ENCODE measurements at regions of chr1 and their contacts with region 1.

Region 1: DNA sequence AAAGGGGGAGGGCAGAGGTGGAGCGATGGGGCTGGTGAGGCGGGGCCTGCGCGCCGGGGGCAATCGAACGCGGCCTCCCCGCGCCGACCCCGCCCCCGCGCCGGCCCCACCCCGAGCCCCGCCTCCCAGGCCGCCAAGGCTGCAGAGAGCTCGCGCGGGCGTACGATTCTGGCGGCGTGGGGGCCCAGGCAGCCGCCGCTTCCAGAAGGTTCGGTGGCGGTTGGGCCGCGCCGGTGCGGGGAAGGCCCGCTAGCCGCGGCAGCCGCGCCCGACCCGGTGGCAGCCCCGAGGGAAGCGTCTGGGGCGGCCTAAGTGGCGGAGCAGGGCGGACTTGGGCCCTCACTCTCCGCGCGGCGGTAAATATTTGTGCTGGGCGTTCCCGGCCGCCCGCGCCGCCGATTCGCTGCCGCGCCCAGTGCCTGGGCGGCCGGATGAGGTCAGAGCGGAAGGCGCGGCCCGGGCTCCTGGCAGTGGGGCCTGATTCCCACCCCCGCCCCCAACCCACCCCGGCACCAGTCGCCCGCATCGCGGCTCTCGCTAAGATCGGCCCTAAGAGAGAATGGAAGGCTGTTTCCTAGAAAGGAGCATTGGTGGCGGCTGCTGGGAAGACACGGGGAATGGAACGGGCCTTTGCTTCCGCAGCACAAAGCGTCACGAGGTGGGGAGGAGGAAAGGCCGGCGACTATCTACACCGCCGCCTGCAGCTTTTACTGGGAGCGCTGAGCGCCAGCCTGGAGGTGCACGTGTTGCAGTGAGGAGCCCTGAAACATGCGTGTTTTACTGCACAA is at the start of gene ACOT7:
- DNase-seq: peak; percentile 94
- H3K4me3 Mint-ChIP-seq: peak within 1 kb of the TSS; percentile 81
- H3K27ac Mint-ChIP-seq: peak within 1 kb of the TSS; percentile 84
- H3K4me1 Mint-ChIP-seq: peaks cover 21% of the 10 kb centered on the region
- H3K27me3 Mint-ChIP-seq: no peaks in the 10 kb centered on the region
- total RNA-seq, gene ACOT7: 74.2 to 77.6 TPM

Region 2: DNA sequence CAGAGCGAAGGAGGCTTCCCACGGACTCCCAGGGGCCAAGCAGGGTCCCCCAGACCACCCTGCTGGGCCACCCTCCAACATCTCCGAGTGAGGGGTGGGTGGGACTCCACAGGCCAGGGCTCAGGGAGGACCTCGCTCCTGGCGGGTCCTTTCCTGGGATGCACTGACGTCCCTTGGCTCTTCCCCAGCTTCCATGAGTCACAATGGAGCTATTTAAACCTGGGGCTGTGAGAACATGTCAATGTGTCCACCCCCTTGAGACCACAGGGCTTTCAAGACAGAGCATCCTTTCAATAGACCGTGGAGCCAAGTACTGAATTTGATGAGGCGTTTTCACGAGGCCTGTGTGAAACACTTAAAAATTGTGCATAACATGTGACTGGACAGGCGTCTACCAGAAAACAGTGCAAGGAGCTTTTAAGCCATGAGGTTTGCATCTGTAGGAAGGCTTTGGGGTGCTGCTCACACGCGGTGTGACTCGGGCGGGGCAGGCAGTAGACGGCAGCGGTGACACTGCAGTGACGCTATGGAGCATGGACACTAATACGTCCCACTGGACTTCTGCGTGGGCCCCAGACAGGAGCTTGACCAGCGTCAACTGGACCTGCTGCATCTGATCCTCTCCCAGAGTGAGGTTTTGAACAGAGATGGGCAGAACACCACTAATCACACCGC is 377.3 kb before region 1 on chr1:
- CTCF ChIA-PET with region 1: no interaction called
- intact Hi-C with region 1: no loop called
- DNase-seq: no peak
- H3K4me3 Mint-ChIP-seq: no peak overlapping the region
- H3K27ac Mint-ChIP-seq: no peak overlapping the region
- H3K4me1 Mint-ChIP-seq: no peaks in the 10 kb centered on the region
- H3K27me3 Mint-ChIP-seq: no peaks in the 10 kb centered on the region

Region 3: DNA sequence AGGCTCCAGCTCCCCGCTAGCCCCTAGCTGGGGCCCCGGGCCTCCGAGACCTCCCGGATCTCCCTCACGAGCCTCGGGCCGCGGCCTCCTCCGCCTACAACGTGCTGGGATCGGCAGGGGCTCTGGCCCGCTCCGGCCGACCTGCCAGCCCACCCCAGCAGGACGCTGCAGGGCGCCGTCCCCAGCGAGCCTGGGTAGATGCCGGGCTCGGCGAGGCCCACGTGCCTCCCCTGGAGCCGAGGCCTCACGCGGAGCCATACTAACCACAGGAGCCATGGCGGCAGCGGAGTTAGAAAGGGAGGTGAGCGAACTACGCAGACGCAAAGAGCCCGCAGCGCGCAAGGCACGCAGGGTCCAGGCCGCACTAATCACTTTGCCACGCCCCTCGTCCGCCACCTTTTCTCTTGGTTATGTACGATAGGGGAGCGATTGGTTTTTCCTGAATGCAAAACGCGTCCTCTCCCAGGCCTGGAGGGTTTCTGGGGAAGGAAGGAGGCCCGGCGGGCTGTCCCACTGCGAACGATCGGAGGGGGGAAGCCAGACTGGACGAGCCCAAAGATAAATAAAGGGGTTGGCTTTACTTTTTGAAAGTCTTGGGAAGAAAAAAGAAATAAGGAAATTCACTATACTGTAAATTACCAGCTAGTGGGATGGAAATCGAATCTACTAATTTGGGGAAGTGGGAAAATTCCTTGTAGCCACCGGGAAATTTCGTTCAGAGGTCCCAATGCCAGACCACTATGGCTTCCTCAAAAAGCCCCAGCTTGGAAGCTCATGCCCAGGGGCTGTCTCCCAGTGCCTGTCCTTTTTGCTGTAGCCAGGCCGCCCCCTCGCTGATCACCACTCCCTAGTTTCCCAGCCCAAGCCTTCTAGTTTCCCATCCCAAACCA is 194.1 kb before region 1 on chr1 and contains the start of gene RPL22:
- CTCF ChIA-PET with region 1: no interaction called
- intact Hi-C with region 1: loop called (anchors 1 kb)
- DNase-seq: peak; percentile 99
- H3K4me3 Mint-ChIP-seq: peak within 1 kb of the TSS; percentile 91
- H3K27ac Mint-ChIP-seq: peak within 1 kb of the TSS; percentile 95
- H3K4me1 Mint-ChIP-seq: peaks cover 39% of the 10 kb centered on the region
- H3K27me3 Mint-ChIP-seq: no peaks in the 10 kb centered on the region
- total RNA-seq, gene RPL22: 507 to 553 TPM

Region 4: GRCh38 chr1:6343506-6344405 is 49.8 kb before region 1 on chr1:
- CTCF ChIA-PET with region 1: interaction called, 6 read pairs
- intact Hi-C with region 1: loop called (anchors 1 kb)
- DNase-seq: peak; percentile 76
- H3K4me3 Mint-ChIP-seq: no peak overlapping the region
- H3K27ac Mint-ChIP-seq: no peak overlapping the region
- H3K4me1 Mint-ChIP-seq: peaks cover 10% of the 10 kb centered on the region
- H3K27me3 Mint-ChIP-seq: no peaks in the 10 kb centered on the region

Region 5: DNA sequence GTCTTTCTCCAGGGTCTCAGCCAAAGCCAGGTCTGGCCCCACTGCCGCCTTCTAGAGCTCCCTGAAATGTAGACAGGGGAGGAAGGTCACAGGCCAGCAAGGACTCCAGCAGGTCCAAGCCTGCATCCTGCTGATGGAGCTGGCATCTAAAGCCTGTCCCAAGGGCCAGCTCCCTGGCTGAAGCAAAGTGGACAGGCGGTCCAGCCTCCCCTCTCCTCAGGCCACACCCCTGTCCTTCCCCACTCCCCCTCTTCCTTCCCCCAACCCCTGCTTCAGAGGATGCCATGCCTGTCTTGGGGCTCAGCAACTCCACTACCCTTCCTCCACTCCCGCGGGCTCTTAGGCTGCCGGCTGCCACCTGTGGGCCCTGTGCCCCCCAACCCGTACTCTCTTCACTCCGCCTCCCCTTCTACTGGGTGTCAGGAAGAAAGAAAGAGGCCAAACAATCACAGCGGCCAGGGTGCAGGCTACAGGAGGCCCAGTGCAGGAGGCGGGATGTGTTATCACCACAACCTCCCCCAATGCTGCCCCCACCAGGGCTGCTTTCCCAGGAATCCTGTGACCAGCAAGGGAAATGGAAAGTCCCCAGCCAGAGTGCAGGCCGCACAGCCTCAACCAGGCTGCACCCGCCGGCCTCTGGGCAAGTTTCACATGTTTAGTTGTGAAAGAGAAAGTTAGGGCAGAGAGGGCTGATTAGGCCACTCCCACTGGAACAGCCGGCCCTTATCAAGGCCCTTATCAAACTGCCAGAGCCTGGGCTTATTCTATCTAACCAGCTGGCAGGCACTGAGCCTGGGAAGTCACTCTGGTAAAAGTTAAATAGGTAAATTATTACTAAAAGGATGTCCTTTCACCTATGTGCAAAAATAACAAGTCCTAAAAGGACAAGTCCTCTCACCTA is 34.1 kb before region 1 on chr1:
- CTCF ChIA-PET with region 1: interaction called, 31 read pairs
- intact Hi-C with region 1: no loop called
- DNase-seq: peak; percentile 59
- H3K4me3 Mint-ChIP-seq: peak overlapping the region; percentile 39
- H3K27ac Mint-ChIP-seq: peak overlapping the region; percentile 72
- H3K4me1 Mint-ChIP-seq: peaks cover 42% of the 10 kb centered on the region
- H3K27me3 Mint-ChIP-seq: no peaks in the 10 kb centered on the region

Region 6: DNA sequence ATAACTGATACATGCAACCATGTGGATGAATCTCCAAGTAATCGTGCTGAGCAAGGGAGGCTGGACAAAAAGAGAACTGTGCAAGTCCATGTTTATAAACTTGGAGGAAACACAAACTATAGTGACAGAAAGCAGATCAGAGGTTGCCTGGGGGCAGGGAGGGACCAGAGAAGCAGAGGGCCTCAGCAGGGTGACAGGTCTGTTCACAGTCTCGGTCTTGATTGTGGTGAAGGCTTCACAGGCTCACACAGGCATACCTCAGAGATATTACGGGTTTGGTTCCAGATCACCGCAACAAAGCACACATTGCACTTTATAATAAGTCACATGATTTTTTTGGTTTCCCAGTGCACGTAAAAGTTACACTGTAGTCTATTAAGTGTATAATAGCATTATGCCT is 28.5 kb before region 1 on chr1:
- CTCF ChIA-PET with region 1: interaction called, 31 read pairs
- intact Hi-C with region 1: loop called (anchors 1 kb)
- DNase-seq: peak; percentile 68
- H3K4me3 Mint-ChIP-seq: no peak overlapping the region
- H3K27ac Mint-ChIP-seq: peak overlapping the region; percentile 44
- H3K4me1 Mint-ChIP-seq: peaks cover 33% of the 10 kb centered on the region
- H3K27me3 Mint-ChIP-seq: no peaks in the 10 kb centered on the region